Endothelial cell of umbilical vein (primary cell): ENCODE measurements at regions of chr6 and their contacts with region 1.

Region 1: DNA sequence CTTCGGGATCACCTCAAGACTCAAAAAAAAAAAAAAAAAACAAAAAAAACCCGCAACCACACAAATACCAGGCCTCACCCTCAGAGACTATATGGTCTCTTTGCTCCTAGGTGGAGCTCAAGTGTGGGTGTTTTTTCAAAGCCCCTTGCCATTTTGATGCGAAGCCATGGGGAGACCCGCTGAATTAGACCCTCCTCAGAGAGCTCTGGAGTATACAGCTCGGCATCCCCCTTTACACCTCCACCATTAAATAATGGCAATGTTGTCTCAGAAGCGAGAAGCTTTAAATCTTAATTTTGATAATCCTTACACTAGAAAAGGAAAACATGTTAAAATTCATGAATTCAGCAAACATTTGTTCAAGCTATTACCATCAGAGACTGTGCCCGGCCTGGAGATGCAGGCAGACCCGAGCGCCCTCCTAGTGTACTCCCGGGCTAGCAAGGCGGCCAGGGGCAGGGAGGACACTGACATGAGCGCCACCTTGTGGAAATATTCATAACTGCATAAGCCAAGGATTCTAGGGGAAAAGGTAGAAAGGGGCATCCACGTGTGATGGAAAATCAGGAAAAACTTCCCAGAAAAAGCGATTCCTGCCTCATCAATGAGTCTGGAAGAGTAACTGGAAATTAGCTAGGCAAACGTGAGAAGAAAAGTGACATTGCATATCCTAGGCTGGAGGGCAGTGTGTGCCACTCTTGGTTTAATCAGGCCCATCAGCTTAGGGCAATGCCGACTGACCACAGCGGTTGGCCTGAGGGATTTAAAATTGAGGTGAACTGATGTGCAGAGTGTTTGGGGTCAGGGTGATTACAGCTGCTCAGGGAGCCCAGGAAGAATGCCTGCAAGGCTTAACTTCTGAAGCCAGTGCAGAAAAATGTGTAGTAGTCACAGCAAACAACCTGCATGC is 72.5 kb downstream of the B3GAT2 start:
- DNase-seq: peak; percentile 55
- H3K4me3 ChIP-seq: no peak overlapping the region
- H3K27ac ChIP-seq: no peak overlapping the region
- H3K4me1 ChIP-seq: no peaks in the 10 kb centered on the region
- H3K27me3 ChIP-seq: peaks cover 2% of the 10 kb centered on the region in 2 experiments
- CTCF ChIP-seq: peak; percentile 74
- POLR2A ChIP-seq: no peak

Region 2: DNA sequence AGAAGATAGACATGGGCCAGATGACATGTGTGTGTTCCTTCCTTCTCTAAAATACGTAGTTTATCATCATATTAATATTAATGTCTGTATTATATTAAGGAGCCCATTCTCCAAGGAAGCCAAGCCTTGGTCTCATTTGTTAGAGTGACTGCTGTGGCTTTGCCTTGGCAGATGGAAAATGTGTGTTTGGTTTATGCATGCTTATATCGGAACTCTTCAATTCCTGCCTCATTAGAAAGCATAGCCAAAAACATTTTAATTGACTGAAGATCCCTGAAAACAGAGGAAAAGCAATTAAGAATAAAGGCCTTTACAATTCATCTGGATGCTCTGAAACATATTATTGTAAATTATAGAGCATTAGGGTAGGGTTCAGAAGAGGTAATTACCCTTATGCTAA is 687.8 kb before region 1 on chr6:
- CTCF ChIA-PET with region 1: no interaction called
- POLR2A ChIA-PET with region 1: no interaction called
- dilution Hi-C with region 1: no loop called
- intact Hi-C with region 1: no loop called
- DNase-seq: no peak
- H3K4me3 ChIP-seq: no peak overlapping the region
- H3K27ac ChIP-seq: no peak overlapping the region
- H3K4me1 ChIP-seq: no peaks in the 10 kb centered on the region
- H3K27me3 ChIP-seq: no peaks in the 10 kb centered on the region
- CTCF ChIP-seq: no peak
- POLR2A ChIP-seq: no peak

Region 3: DNA sequence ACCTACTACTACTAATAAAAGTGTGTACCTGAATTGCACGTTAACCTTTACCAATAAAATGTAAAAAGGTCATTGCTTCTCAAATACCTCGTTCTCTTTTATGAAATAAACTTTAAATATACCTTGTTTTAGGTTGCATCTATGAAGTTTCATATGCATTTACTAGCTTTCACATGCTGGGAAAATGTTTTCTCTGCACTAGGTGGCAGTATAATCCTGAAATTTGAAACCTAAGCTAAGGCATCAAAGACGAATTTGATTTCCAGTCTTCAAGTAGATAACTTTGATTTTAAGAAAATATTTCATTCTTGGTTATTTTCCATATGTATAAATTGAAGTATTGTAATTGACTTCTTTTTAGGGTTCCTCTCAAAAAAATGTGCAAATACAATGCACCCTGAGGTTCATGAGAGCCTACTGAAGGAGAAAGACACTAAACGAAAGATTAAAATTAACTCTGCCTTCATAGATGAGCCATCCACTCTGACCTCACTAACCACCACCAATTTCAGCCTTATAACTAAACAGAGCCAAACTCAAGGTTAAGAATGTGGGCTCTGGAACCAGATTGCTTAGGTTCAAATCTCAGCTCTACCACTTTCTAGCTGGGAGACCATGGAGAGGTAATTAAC is 574.1 kb before region 1 on chr6:
- CTCF ChIA-PET with region 1: interaction called, 17 read pairs
- POLR2A ChIA-PET with region 1: no interaction called
- dilution Hi-C with region 1: no loop called
- intact Hi-C with region 1: loop called (anchors 1 kb)
- DNase-seq: peak; percentile 54
- H3K4me3 ChIP-seq: no peak overlapping the region
- H3K27ac ChIP-seq: no peak overlapping the region
- H3K4me1 ChIP-seq: no peaks in the 10 kb centered on the region
- H3K27me3 ChIP-seq: peaks cover 0 to 5% of the 10 kb centered on the region in 2 experiments
- CTCF ChIP-seq: peak; percentile 25 to 33
- POLR2A ChIP-seq: no peak

Region 4: DNA sequence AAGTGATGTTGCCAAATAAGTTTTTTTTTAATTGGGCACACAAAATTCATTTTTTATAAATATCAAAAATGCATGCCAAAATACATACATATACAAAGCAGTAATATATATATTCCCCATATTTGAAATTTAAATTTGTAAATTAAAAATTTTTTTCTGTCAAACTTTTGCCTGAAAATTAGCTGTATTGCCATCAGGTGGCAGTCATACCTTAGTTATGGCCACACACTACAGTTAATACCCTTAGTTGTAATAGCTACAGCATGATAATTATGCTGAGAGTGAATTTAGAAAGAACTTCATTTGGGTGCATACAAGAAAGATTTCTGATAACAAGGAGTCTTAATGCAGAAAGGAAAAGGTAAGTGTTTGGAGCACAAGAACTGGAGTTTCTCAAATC is 363.8 kb before region 1 on chr6:
- CTCF ChIA-PET with region 1: interaction called, 43 read pairs
- POLR2A ChIA-PET with region 1: no interaction called
- dilution Hi-C with region 1: no loop called
- intact Hi-C with region 1: loop called (anchors 5 kb)
- DNase-seq: peak; percentile 13
- H3K4me3 ChIP-seq: no peak overlapping the region
- H3K27ac ChIP-seq: no peak overlapping the region
- H3K4me1 ChIP-seq: no peaks in the 10 kb centered on the region
- H3K27me3 ChIP-seq: no peaks in the 10 kb centered on the region
- CTCF ChIP-seq: peak in 1 of 2 donors; percentile 4
- POLR2A ChIP-seq: no peak

Region 5: GRCh38 chr6:70700922-70701876 is 183.1 kb before region 1 on chr6:
- CTCF ChIA-PET with region 1: interaction called, 38 read pairs
- POLR2A ChIA-PET with region 1: no interaction called
- dilution Hi-C with region 1: no loop called
- intact Hi-C with region 1: loop called (anchors 1 kb)
- DNase-seq: no peak
- H3K4me3 ChIP-seq: no peak overlapping the region
- H3K27ac ChIP-seq: no peak overlapping the region
- H3K4me1 ChIP-seq: no peaks in the 10 kb centered on the region
- H3K27me3 ChIP-seq: no peaks in the 10 kb centered on the region
- CTCF ChIP-seq: no peak
- POLR2A ChIP-seq: no peak

Region 6: DNA sequence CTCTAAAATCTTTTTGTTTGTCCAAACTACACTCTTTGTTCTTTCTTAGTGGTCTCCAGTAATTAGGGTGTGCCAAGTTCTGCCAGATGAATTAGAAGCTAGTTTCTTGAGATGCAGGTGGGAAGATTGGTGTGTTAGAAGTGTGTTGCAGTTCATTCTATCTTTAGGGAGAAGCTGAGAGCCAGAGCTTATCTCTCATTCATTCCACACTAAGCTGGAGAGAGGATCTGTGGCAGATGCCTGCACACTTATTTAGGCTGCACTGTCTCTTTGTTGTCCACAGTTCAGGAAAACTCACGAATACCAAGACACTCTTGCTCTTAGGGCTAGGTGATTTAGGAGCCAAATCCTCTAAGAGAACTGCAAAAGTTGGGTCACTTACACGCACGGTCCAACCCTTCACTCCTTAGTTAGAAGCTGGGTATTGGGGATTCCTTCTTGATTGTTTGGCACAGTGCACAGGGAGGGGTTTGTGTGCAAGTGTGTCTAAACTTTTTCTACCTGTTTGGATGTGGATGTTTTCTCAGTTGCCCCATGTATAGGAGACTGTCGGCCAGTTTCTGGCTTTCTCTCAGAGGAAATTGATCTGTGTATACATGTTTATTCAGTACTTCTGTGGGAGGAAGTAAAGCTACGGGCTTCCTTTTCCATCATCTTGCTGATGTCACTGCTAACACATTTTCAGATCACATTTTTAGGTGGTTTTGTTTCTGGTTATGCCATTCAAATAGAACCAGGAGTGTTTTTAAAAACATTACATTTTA is 167.1 kb before region 1 on chr6:
- CTCF ChIA-PET with region 1: interaction called, 39 read pairs
- POLR2A ChIA-PET with region 1: no interaction called
- dilution Hi-C with region 1: no loop called
- intact Hi-C with region 1: no loop called
- DNase-seq: peak; percentile 64
- H3K4me3 ChIP-seq: no peak overlapping the region
- H3K27ac ChIP-seq: peak overlapping the region; percentile 17
- H3K4me1 ChIP-seq: peaks cover 8% of the 10 kb centered on the region
- H3K27me3 ChIP-seq: no peaks in the 10 kb centered on the region
- CTCF ChIP-seq: no peak
- POLR2A ChIP-seq: no peak

Region 7: GRCh38 chr6:71012866-71013469 is 128.6 kb after region 1 on chr6:
- CTCF ChIA-PET with region 1: interaction called, 4 read pairs
- POLR2A ChIA-PET with region 1: no interaction called
- dilution Hi-C with region 1: no loop called
- intact Hi-C with region 1: loop called (anchors 1 kb)
- DNase-seq: peak; percentile 39
- H3K4me3 ChIP-seq: no peak overlapping the region
- H3K27ac ChIP-seq: no peak overlapping the region
- H3K4me1 ChIP-seq: no peaks in the 10 kb centered on the region
- H3K27me3 ChIP-seq: no peaks in the 10 kb centered on the region
- CTCF ChIP-seq: peak; percentile 69 to 71
- POLR2A ChIP-seq: no peak

Region 8: DNA sequence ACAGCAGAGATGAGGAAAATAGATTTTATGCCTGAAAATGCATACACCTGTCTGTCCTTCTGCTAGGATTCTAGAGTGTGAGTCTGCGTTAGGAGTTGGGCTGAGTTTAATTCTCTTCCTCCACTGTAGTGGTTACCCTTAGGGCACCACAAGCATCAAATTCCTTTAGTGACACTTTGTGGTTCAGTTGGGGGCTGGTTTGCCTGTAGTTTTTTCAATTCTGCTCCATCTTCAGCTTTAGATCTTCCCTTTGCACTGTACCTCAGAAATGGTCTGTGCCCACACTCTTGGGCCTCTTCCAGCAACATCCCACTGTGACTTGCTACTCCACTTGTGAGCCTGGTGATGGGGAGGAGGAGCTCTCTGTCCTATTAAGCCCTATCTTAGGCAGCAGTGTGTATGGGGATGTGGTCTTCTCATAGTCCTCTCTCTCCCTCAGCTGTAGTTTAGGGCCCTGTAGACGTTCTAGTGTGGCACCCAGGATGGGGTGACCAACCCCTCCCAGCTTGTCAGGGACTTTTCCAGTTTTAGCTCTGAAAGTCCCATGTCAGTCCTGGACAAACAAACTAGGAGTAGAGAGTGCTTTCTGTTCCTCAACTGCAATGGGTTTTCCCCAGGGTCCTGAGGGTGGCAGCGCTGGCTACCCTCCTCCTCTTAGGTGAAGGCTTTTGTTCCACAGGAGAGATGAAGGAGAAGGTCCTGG is 384.6 kb after region 1 on chr6:
- CTCF ChIA-PET with region 1: no interaction called
- POLR2A ChIA-PET with region 1: no interaction called
- dilution Hi-C with region 1: no loop called
- intact Hi-C with region 1: no loop called
- DNase-seq: no peak
- H3K4me3 ChIP-seq: no peak overlapping the region
- H3K27ac ChIP-seq: no peak overlapping the region
- H3K4me1 ChIP-seq: no peaks in the 10 kb centered on the region
- H3K27me3 ChIP-seq: no peaks in the 10 kb centered on the region
- CTCF ChIP-seq: no peak
- POLR2A ChIP-seq: no peak